ENCODE measurements at regions of chr1 and their contacts with region 1.

Region 1: DNA sequence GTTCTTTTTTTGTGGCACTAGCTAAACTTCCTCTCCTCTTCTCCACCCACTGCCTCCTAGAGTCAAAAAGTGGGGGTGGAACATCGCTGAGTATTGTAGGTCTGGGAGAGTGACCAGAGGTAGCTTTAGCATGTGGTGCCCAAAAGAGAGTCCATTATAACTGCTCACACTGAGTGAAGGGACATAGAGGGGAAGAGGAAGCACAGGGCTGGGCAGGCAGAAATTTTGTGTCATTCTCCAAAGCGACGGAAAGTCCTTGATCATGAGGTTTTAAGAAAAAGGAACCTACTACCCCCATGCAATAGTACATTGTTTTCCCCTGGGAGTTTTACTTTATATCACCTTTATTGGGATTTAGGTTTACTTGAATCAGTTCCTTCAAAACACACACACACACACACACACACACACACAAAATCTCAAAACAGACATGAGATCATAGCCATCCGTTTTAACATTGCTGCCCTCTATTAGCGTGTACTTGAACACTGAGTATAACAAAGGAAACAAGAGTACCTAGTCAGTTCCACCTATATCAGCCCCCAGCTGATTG is 4.1 kb downstream of the CD84 start:
- DNase-seq: no peak
- H3K4me3 Mint-ChIP-seq: peak overlapping the region; percentile 63
- H3K27ac Mint-ChIP-seq: peak overlapping the region; percentile 96
- H3K4me1 Mint-ChIP-seq: peaks cover 82% of the 10 kb centered on the region
- H3K27me3 Mint-ChIP-seq: no peaks in the 10 kb centered on the region

Region 2: GRCh38 chr1:160451119-160451858 is 123.9 kb before region 1 on chr1:
- CTCF ChIA-PET with region 1: interaction called, 3 read pairs
- POLR2A ChIA-PET with region 1: interaction called, 4 read pairs
- intact Hi-C with region 1: loop called (anchors 2 kb)
- DNase-seq: peak; percentile 45
- H3K4me3 Mint-ChIP-seq: peak overlapping the region; percentile 53
- H3K27ac Mint-ChIP-seq: peak overlapping the region; percentile 97
- H3K4me1 Mint-ChIP-seq: peaks cover 79% of the 10 kb centered on the region
- H3K27me3 Mint-ChIP-seq: no peaks in the 10 kb centered on the region

Region 3: GRCh38 chr1:160539990-160540858 is 35.0 kb before region 1 on chr1:
- CTCF ChIA-PET with region 1: interaction called, 12 read pairs
- POLR2A ChIA-PET with region 1: interaction called, 3 read pairs
- intact Hi-C with region 1: loop called (anchors 2 kb)
- DNase-seq: peak; percentile 71
- H3K4me3 Mint-ChIP-seq: peak overlapping the region; percentile 46
- H3K27ac Mint-ChIP-seq: peak overlapping the region; percentile 95
- H3K4me1 Mint-ChIP-seq: peaks cover 59% of the 10 kb centered on the region
- H3K27me3 Mint-ChIP-seq: no peaks in the 10 kb centered on the region

Region 4: GRCh38 chr1:160607011-160607671 is 32.0 kb after region 1 on chr1:
- CTCF ChIA-PET with region 1: interaction called, 9 read pairs
- POLR2A ChIA-PET with region 1: interaction called, 4 read pairs
- intact Hi-C with region 1: loop called (anchors 2 kb)
- DNase-seq: peak; percentile 74
- H3K4me3 Mint-ChIP-seq: no peak overlapping the region
- H3K27ac Mint-ChIP-seq: peak overlapping the region; percentile 78
- H3K4me1 Mint-ChIP-seq: peaks cover 63% of the 10 kb centered on the region
- H3K27me3 Mint-ChIP-seq: no peaks in the 10 kb centered on the region

Measured in activated CD4-positive, alpha-beta memory T cell treated with anti-CD3 and anti-CD28 coated beads for 36 hours (primary cell).